ENCODE measurements at regions of chr14 and their contacts with region 1.

Region 1: GRCh38 chr14:21071225-21072030 is 1.3 kb downstream of the ARHGEF40 start:
- DNase-seq: peak; percentile 59
- ATAC-seq: peak; percentile 57
- H3K4me3 Mint-ChIP-seq: peak overlapping the region; percentile 79
- H3K27ac Mint-ChIP-seq: no peak overlapping the region
- H3K4me1 Mint-ChIP-seq: peaks cover 29% of the 10 kb centered on the region
- H3K27me3 Mint-ChIP-seq: peaks cover 63% of the 10 kb centered on the region

Region 2: DNA sequence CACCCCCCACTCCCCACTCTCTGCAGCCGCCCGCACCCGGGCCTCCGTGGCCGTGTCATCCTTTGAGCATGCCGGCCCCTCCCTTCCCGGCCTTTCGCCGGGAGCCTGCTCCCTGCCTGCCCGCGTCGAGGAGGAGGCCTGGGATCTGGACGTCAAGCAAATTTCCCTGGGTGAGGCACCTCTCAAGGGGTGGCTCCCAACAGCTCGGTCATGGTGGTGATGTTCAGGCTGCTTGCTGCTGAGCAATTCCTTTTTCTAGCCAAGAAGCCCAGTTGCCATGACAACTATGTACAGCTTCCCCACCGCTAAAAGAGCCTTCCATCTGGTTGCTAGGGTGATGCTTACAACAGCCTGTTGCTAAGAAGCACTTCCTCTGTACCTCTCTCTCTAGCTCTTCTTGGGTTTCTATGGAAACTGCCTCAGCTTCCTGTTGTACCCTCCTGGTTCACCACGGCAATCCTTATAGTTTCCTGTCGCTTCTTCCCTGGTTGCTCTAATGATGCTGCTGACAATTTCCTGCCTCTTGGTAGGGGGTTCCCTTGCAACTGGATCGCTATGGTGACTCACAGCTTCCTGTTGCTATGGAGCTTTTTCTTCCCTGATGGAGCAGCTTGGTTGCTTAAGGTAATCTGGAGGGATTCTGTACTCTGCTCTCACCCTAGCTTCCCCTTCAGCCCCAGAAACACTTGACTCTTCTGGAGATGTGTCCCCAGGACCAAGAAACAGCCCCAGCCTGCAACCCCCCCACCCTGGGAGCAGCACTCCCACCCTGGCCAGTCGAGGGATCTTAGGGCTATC is 16.1 kb after region 1 on chr14:
- POLR2A ChIA-PET with region 1: interaction called, 16 read pairs
- DNase-seq: no peak
- ATAC-seq: peak; percentile 74
- H3K4me3 Mint-ChIP-seq: no peak overlapping the region
- H3K27ac Mint-ChIP-seq: peak overlapping the region; percentile 53
- H3K4me1 Mint-ChIP-seq: peaks cover 21% of the 10 kb centered on the region
- H3K27me3 Mint-ChIP-seq: peaks cover 2% of the 10 kb centered on the region

Region 3: GRCh38 chr14:21123429-21123828 is 52.0 kb after region 1 on chr14:
- POLR2A ChIA-PET with region 1: no interaction called
- DNase-seq: no peak
- ATAC-seq: no peak
- H3K4me3 Mint-ChIP-seq: no peak overlapping the region
- H3K27ac Mint-ChIP-seq: no peak overlapping the region
- H3K4me1 Mint-ChIP-seq: peaks cover 2% of the 10 kb centered on the region
- H3K27me3 Mint-ChIP-seq: peaks cover 24% of the 10 kb centered on the region

Region 4: GRCh38 chr14:21185491-21185890 is 114.1 kb after region 1 on chr14:
- POLR2A ChIA-PET with region 1: no interaction called
- DNase-seq: no peak
- ATAC-seq: no peak
- H3K4me3 Mint-ChIP-seq: no peak overlapping the region
- H3K27ac Mint-ChIP-seq: no peak overlapping the region
- H3K4me1 Mint-ChIP-seq: no peaks in the 10 kb centered on the region
- H3K27me3 Mint-ChIP-seq: peaks cover 14% of the 10 kb centered on the region